ENCODE measurements at regions of chr2 and their contacts with region 1.

Region 1: GRCh38 chr2:188628989-188629688 is 337.5 kb downstream of the GULP1 start:
- DNase-seq: peak; percentile 29 to 56
- H3K4me3 ChIP-seq: no peak overlapping the region
- H3K27ac ChIP-seq: no peak overlapping the region
- H3K4me1 ChIP-seq: 0 out of 2 replicates have a peak, but pooled peaks cover 3% of the 10 kb centered on the region
- H3K27me3 ChIP-seq: no peaks in the 10 kb centered on the region
- CTCF ChIP-seq: no peak

Region 2: GRCh38 chr2:188485496-188485895 is 143.6 kb before region 1 on chr2:
- CTCF ChIA-PET with region 1: no interaction called
- POLR2A ChIA-PET with region 1: no interaction called
- intact Hi-C with region 1: no loop called
- DNase-seq: no peak
- H3K4me3 ChIP-seq: no peak overlapping the region
- H3K27ac ChIP-seq: no peak overlapping the region
- H3K4me1 ChIP-seq: no peaks in the 10 kb centered on the region
- H3K27me3 ChIP-seq: no peaks in the 10 kb centered on the region
- CTCF ChIP-seq: no peak

Region 3: DNA sequence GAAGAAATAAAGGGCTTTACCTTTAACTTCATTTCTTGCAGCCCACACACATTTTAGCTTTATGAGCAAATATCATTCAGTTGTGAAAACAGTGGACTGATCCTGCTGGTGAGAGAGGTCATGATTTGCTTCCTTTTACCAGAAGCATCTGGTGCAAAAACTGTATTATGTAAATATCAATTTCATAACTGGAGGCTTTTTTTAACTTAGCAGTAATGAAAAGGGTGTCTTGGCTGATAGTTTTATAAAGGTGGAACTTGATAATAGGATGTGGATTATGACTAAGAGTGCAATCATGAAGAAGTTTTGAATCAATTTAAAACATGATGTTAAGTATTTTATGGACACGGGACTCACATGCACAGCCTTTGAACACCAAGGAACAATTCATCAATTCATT is 33.1 kb before region 1 on chr2:
- CTCF ChIA-PET with region 1: no interaction called
- POLR2A ChIA-PET with region 1: interaction called, 12 read pairs
- intact Hi-C with region 1: no loop called
- DNase-seq: no peak
- H3K4me3 ChIP-seq: no peak overlapping the region
- H3K27ac ChIP-seq: no peak overlapping the region
- H3K4me1 ChIP-seq: no peaks in the 10 kb centered on the region
- H3K27me3 ChIP-seq: no peaks in the 10 kb centered on the region
- CTCF ChIP-seq: no peak

Measured in PC-9 (cell line).